WTC11 (cell line): ENCODE measurements at regions of chr5 and their contacts with region 1.

Region 1: GRCh38 chr5:132807163-132807838 is 5.8 kb upstream of the SOWAHA start:
- DNase-seq: peak; percentile 67
- ATAC-seq: peak; percentile 99
- H3K4me3 Mint-ChIP-seq: no peak overlapping the region
- H3K27ac Mint-ChIP-seq: no peak overlapping the region
- H3K4me1 Mint-ChIP-seq: peaks cover 16% of the 10 kb centered on the region
- H3K27me3 Mint-ChIP-seq: peaks cover 41% of the 10 kb centered on the region
- CTCF ChIP-seq: no peak

Region 2: GRCh38 chr5:132736853-132737833 is 70.2 kb before region 1 on chr5 and contains the start of gene KIF3A:
- CTCF ChIA-PET with region 1: interaction called, 15 read pairs
- POLR2A ChIA-PET with region 1: no interaction called
- DNase-seq: peak; percentile 99
- ATAC-seq: peak; percentile 96
- H3K4me3 Mint-ChIP-seq: peak within 1 kb of the TSS; percentile 79
- H3K27ac Mint-ChIP-seq: no peak within 1 kb of the TSS; the same call in 1 of the 2 replicates
- H3K4me1 Mint-ChIP-seq: peaks cover 15% of the 10 kb centered on the region
- H3K27me3 Mint-ChIP-seq: peaks cover 4% of the 10 kb centered on the region; the same call in 1 of the 2 replicates
- CTCF ChIP-seq: no peak
- total RNA-seq, gene KIF3A: 10.1 to 12.5 TPM (median 12.1 TPM) in 3 replicates

Region 3: DNA sequence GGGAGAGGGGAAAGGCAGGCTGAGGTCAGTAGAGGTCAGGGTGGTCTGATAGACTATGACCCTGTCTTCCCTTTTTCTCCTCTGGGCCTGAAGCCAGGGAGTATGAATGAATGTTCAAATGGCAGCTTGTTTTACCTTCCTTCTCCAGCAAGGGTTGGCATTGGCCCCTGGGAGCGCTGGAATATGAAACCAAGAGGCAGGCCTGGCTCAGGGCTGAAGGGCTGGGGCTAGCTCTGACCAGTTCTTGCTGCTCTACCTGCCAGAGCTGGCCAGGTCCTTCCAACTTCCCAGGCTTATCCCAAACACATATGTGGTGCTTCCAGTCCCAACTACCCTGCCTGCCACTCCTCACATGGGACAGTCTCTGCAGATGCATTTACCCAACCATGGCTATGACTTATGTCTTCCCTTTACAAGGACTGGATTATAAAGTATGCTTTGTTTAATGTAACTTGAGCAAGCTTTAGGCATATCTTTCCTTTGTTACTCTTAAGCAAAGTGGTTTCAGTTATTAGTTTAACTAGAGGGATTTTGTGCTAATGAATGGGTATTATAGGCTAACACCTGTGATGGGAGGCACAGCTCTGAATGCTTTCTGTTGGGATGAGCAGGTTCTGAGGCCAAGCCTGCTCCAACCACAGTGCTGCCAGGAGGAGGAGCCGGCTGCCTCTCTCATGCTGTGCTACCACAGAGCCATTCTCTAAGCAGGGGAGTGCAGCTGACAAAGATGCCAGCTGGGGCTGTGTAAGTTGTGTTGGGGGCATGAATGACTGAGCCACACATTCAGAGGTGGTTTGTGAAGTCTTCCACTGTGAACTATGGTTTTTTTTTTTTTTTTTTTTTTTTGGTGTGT is 53.9 kb before region 1 on chr5:
- CTCF ChIA-PET with region 1: interaction called, 40 read pairs
- POLR2A ChIA-PET with region 1: no interaction called
- DNase-seq: peak; percentile 40
- ATAC-seq: peak; percentile 91
- H3K4me3 Mint-ChIP-seq: no peak overlapping the region
- H3K27ac Mint-ChIP-seq: peak overlapping the region; percentile 28; the same call in 1 of the 2 replicates
- H3K4me1 Mint-ChIP-seq: peaks cover 17% of the 10 kb centered on the region
- H3K27me3 Mint-ChIP-seq: peaks cover 25% of the 10 kb centered on the region
- CTCF ChIP-seq: no peak

Region 4: GRCh38 chr5:132829742-132830435 is 22.6 kb after region 1 on chr5:
- CTCF ChIA-PET with region 1: interaction called, 18 read pairs
- POLR2A ChIA-PET with region 1: no interaction called
- DNase-seq: peak; percentile 78
- ATAC-seq: peak; percentile 56
- H3K4me3 Mint-ChIP-seq: peak overlapping the region; percentile 74
- H3K27ac Mint-ChIP-seq: no peak overlapping the region
- H3K4me1 Mint-ChIP-seq: peaks cover 11% of the 10 kb centered on the region
- H3K27me3 Mint-ChIP-seq: peaks cover 78% of the 10 kb centered on the region
- CTCF ChIP-seq: peak; percentile 60; the same call in 1 of the 2 replicates